HEK293T (cell line): ENCODE measurements at regions of chr1 and their contacts with region 1.

Region 1: GRCh38 chr1:223556414-223557129 is 108.9 kb downstream of the CAPN8 start:
- DNase-seq: peak; percentile 81

Region 2: GRCh38 chr1:223444437-223444836 is 112.1 kb before region 1 on chr1:
- CTCF ChIA-PET with region 1: no interaction called
- POLR2A ChIA-PET with region 1: no interaction called
- DNase-seq: no peak

Region 3: GRCh38 chr1:223515926-223516325 is 40.6 kb before region 1 on chr1:
- CTCF ChIA-PET with region 1: no interaction called
- POLR2A ChIA-PET with region 1: no interaction called
- DNase-seq: no peak

Region 4: GRCh38 chr1:223543560-223543959 is 13.0 kb before region 1 on chr1:
- CTCF ChIA-PET with region 1: interaction called, 17 read pairs
- POLR2A ChIA-PET with region 1: interaction called, 3 read pairs
- DNase-seq: no peak

Region 5: DNA sequence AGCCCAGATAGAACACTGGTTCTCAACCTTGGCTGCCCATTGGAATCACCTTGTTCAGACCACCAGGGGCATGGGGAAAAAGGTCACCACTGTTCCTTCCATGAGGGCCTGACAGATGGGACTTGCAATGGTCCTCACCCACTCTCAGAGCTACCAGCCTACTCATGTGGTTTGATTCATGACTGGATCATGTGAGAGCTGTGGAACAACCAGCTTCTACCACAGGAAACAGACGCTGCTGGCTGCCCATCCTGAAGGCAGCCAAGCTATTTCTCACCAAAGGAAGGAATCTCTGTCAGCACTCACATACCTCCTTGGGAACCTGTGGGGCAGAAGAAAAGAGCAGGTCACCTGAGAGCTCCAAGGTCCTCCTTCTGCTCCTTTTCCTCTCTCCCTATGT is 55.4 kb after region 1 on chr1:
- CTCF ChIA-PET with region 1: interaction called, 53 read pairs
- POLR2A ChIA-PET with region 1: interaction called, 4 read pairs
- DNase-seq: no peak

Region 6: DNA sequence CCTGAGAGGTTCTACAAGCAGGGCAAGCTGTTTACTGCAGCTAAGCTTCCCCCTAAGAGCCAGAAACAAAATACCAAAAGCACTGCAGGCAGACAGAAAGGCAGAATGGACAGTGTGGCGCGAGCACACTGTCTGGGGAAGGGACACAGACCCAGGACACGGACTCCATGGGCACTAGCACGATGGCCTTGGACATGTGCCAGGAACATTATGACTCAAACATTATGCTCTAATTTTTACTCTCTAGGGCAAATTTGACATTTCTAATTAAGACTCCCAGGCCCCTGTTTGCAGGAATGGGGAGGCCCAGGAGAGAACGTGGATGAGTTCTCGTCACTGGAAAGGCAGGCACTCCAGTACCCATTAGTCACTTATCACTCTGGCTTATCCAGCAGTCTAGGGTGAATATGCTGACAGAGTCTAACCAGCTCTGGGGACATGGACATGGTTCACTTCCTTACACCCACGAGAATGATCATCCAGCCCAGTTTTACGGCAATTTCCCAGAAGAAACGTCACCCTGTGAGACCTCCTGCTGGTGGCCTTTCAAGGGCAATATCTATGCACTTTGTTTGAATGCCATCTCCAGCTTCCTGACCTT is 63.8 kb after region 1 on chr1:
- CTCF ChIA-PET with region 1: interaction called, 12 read pairs
- POLR2A ChIA-PET with region 1: interaction called, 3 read pairs
- DNase-seq: no peak

Region 7: GRCh38 chr1:223628233-223629125 is 71.9 kb after region 1 on chr1:
- CTCF ChIA-PET with region 1: interaction called, 17 read pairs
- POLR2A ChIA-PET with region 1: no interaction called
- DNase-seq: peak; percentile 90

Region 8: DNA sequence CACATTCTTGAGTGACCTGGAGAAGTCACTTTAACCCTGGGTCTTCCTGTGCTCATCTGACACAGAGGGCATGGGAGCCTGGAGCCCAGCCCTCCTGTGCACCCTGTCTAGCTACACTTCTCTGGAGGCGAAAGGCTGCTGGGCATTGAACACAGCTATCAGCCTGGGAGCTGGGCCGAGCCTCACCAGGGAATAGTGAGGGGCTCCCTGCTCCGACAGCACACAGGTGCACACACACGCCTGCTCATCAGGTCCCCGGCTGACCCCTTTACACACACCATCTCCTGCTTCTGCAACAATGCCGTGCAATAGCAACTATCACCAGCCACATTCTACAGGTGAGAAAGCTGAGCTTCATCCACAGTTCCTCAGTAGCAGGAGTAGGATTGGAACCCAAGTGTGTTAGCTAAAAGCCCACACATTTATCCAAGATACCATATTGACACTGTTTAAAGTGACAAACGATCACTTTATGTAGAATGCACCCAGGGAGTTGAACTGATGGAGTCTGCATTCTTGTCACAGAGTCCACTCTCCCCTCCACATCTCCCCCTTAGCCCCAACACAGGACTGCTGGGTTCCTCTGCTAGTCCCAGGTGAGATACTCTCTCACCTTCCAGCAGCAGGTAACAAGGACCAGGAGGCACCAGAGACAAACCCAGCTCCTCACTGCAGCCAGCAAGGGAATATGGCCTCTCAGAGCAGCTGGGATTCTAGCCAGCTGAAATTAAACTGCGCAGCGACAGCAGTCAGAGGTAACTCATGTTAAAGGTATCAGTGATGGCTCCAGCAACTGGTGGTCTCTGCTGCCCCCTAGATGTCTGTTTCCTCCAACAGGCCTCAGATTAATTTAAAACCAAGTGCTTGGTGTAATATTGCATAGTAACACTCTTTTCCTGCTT is 127.3 kb after region 1 on chr1:
- CTCF ChIA-PET with region 1: interaction called, 43 read pairs
- POLR2A ChIA-PET with region 1: interaction called, 3 read pairs
- DNase-seq: peak; percentile 83